Head of caudate nucleus (tissue), 42 donors: ENCODE measurements at regions of chr1 and their contacts with region 1.

Region 1: GRCh38 chr1:235783148-235783776 is 83.4 kb downstream of the LYST start:
- DNase-seq: no peak

Region 2: DNA sequence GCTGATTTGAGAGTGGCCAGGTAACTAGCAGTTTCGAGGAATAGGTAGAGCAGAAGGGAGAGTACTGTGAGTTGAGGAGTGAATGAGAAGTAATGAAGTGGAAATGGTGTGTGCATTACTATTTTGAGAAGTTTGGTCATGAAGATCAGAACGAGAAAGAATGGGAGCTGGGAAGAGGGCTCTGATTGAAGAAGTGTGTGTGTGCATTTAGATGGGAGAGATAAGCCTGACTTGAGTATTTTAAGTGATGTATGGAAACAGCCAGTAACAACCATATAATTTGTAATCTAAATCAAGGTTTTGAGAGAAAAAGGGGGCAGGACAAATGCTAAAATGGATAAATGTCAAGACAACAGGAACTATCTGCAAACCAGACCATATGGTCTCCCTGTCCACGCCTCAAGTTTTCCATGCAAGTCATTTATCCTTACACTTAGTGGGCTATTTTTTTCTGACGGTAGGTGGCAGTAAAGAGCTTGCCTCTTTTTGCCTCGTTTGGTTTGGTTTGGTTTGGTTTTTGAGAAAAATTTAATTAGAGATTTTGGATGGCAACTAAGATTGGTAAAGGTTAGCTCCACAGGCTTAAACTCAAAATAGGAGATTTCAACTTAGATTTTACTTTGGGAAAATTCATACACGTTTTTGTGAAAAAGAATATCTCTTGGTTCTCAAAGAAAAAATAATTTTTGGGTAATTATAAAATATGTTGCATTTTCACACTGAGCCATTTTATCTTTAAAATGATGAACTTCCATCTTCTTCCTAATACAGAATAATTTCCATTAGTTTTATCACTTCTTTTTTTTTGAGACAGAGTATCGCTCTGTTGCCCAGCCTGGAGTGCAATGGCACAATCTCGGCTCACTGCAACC is 269.5 kb before region 1 on chr1:
- intact Hi-C with region 1: loop called (anchors 10 kb)
- DNase-seq: peak in 18 of 42 donors; percentile 7 to 82 (median 41)